ENCODE measurements at regions of chr14 and their contacts with region 1.

Region 1: GRCh38 chr14:49461529-49462401 is 124.4 kb downstream of the RPS29 start:
- DNase-seq: peak in 31 of 35 experiments; percentile 9 to 87 (median 43)
- ATAC-seq: peak; percentile 74 to 87 (median 82)
- H3K4me3 ChIP-seq: no peak overlapping the region
- H3K4me3 Mint-ChIP-seq: no peak overlapping the region
- H3K27ac ChIP-seq: no peak overlapping the region
- H3K27ac Mint-ChIP-seq: no peak overlapping the region
- H3K4me1 ChIP-seq: no peaks in the 10 kb centered on the region
- H3K4me1 Mint-ChIP-seq: no peaks in the 10 kb centered on the region
- H3K27me3 ChIP-seq: no peaks in the 10 kb centered on the region
- H3K27me3 Mint-ChIP-seq: peaks cover 0 to 4% of the 10 kb centered on the region in 2 donors

Region 2: GRCh38 chr14:49479432-49479831 is 17.7 kb after region 1 on chr14:
- CTCF ChIA-PET with region 1: interaction called, 4 to 12 read pairs
- POLR2A ChIA-PET with region 1: no interaction called
- DNase-seq: no peak
- ATAC-seq: no peak
- H3K4me3 ChIP-seq: no peak overlapping the region
- H3K4me3 Mint-ChIP-seq: no peak overlapping the region
- H3K27ac ChIP-seq: no peak overlapping the region
- H3K27ac Mint-ChIP-seq: no peak overlapping the region
- H3K4me1 ChIP-seq: no peaks in the 10 kb centered on the region
- H3K4me1 Mint-ChIP-seq: peaks cover 0 to 6% (median 0%) of the 10 kb centered on the region in 3 donors
- H3K27me3 ChIP-seq: no peaks in the 10 kb centered on the region
- H3K27me3 Mint-ChIP-seq: peaks cover 0 to 4% of the 10 kb centered on the region in 2 donors

Region 3: DNA sequence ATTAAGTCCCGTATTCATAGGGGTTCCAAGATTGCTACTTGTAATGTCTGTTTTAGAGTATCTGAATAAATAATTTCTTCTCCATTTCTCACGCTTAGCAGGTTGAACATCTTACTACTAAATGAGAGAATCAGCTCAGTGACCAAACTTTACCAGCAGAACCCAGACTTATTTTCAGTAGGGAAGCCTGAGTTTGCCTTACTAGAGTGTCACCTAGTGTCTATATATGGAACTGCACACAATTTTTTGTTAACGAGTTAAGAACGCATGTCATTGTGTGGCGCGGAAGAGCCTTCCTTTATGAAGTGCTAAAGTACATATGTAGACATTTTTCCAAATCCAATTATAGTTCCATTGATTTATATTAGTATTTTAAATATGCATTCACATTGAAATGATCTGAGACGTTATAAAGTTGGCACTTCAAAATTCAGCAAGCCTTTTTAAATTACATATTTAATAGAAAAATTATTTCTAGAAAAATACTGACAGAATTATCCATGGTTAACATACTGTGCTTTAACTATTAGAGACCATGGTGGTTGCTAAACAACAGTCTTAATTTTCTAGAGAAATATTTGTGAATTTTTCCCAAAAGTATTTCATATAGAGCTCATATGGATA is 36.1 kb after region 1 on chr14:
- CTCF ChIA-PET with region 1: interaction called, 24 to 28 read pairs
- POLR2A ChIA-PET with region 1: no interaction called
- DNase-seq: peak in 9 of 35 experiments; percentile 0 to 71 (median 6)
- ATAC-seq: peak in 3 of 4 experiments; percentile 59 to 78 (median 59)
- H3K4me3 ChIP-seq: no peak overlapping the region
- H3K4me3 Mint-ChIP-seq: no peak overlapping the region
- H3K27ac ChIP-seq: no peak overlapping the region
- H3K27ac Mint-ChIP-seq: no peak overlapping the region
- H3K4me1 ChIP-seq: no peaks in the 10 kb centered on the region
- H3K4me1 Mint-ChIP-seq: no peaks in the 10 kb centered on the region
- H3K27me3 ChIP-seq: peaks cover 0 to 25% of the 10 kb centered on the region in 2 experiments
- H3K27me3 Mint-ChIP-seq: peaks cover 20 to 27% of the 10 kb centered on the region in 2 donors

Measured in T-cell (primary cell).